Sigmoid colon (tissue), 7 donors: ENCODE measurements at regions of chr7 and their contacts with region 1.

Region 1: DNA sequence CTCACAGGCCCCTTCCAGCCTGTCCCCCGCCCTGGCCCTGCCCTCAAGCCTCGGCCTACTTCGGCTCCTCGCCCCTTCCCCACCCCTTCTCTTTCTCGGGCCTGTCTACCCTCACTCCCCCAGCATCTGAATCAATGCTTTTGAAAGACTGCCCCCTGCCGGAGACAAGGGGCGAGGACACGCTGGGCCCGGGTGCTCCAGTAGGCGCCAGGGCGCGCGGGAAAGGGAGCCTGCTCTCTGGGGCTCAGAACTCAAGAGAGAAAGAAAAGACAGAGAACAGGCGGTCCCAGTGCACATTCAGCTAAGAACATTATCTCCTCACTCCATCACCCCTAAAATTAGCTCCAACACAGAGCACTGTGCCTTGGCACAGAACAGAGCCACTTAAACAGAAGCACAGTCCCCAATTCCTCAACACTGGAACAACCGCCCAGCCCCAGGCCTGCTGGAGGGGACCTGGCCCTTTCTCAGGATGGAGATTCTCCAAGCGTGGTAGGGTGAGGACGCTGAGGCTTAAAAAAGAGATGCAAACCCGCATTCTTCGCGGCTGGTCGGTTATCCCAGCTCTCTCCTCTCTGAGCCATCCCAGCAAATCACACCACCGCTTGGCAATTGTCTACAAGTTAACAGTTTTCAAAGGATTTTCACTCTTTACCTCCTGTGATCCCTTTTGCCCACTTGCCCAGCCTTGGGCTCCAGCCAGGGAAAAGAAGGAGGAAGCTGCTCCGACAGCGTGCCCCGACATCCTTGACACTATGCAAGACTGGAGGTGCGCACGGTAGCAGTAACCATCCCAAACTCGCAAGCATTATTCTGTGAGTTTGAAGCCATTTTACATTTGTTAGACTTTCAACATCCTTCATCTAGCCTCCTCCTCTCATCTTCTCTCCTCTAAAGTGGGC is 2.1 kb downstream of the GIGYF1 start:
- DNase-seq: peak; percentile 89
- H3K4me3 ChIP-seq: peak overlapping the region in 3 of 4 donors; percentile 8 to 99 (median 95)
- H3K27ac ChIP-seq: peak overlapping the region; percentile 38 to 95 (median 84)
- H3K4me1 ChIP-seq: peaks cover 0 to 58% (median 54%) of the 10 kb centered on the region in 4 donors
- H3K27me3 ChIP-seq: no peaks in the 10 kb centered on the region
- CTCF ChIP-seq: peak; percentile 74 to 93 (median 90)
- EP300 ChIP-seq: no peak
- POLR2A ChIP-seq: no peak

Region 2: GRCh38 chr7:100469227-100470044 is 222.5 kb before region 1 on chr7:
- intact Hi-C with region 1: loop called (anchors 5 kb)
- DNase-seq: peak; percentile 94
- H3K4me3 ChIP-seq: no peak overlapping the region
- H3K27ac ChIP-seq: peak overlapping the region; percentile 38 to 77 (median 60)
- H3K4me1 ChIP-seq: peaks cover 0 to 83% (median 69%) of the 10 kb centered on the region in 4 donors
- H3K27me3 ChIP-seq: no peaks in the 10 kb centered on the region
- CTCF ChIP-seq: peak; percentile 87 to 98 (median 95)
- EP300 ChIP-seq: no peak
- POLR2A ChIP-seq: no peak

Region 3: GRCh38 chr7:100563809-100564400 is 128.0 kb before region 1 on chr7:
- intact Hi-C with region 1: loop called (anchors 5 kb)
- DNase-seq: peak; percentile 89
- H3K4me3 ChIP-seq: no peak overlapping the region
- H3K27ac ChIP-seq: no peak overlapping the region
- H3K4me1 ChIP-seq: peaks cover 0 to 5% (median 0%) of the 10 kb centered on the region in 4 donors
- H3K27me3 ChIP-seq: no peaks in the 10 kb centered on the region
- CTCF ChIP-seq: peak; percentile 84 to 98 (median 93)
- EP300 ChIP-seq: no peak
- POLR2A ChIP-seq: no peak

Region 4: DNA sequence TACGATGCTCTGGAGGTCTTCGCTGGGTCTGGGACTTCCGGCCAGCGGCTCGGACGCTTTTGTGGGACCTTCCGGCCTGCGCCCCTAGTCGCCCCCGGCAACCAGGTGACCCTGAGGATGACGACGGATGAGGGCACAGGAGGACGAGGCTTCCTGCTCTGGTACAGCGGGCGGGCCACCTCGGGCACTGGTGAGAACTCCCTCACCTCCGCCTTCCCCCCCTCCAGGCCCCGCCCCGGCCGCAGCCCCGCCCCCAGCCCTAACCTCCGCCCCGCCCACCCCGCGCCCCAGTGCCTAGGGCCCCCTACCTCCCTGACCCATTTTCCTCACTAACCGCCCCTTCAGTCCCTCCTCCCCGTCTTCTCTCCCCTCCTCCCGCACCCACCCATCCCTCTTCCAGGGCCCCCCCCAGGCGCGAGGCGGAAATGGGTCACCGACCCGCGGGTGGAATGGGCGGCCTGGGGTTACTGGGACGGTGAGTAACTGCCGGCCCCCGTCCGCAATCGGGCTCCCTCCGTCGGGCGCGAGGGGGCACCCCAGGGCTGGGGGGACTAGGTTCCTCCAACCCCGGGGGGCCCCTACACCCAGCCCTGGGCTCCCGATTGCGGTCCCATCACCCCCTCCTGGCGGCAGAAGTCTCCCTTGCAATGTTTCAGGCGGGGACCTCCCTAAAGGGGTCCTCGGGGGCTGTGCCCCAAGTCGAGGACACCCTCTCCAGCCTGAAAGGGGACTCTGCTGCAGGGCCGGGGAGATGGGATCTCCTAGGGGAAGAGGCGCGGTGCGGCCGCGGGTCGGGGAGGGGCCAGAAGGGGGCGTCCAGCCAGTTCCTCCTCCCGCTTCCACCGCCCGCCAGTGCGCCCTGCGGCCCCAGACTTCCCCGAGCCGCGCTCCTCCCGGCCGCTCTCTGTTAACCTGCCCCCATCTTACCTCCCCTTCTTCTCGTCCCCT is 87.6 kb before region 1 on chr7:
- intact Hi-C with region 1: loop called (anchors 1 kb)
- DNase-seq: peak; percentile 93
- H3K4me3 ChIP-seq: peak overlapping the region; percentile 74 to 81 (median 78)
- H3K27ac ChIP-seq: peak overlapping the region; percentile 84 to 90 (median 84)
- H3K4me1 ChIP-seq: peaks cover 0 to 41% (median 29%) of the 10 kb centered on the region in 4 donors
- H3K27me3 ChIP-seq: no peaks in the 10 kb centered on the region
- CTCF ChIP-seq: peak in 3 of 4 experiments; percentile 24 to 45 (median 43)
- EP300 ChIP-seq: no peak
- POLR2A ChIP-seq: peak in 1 of 2 donors; percentile 26